ENCODE measurements at regions of chr6 and their contacts with region 1.

Region 1: DNA sequence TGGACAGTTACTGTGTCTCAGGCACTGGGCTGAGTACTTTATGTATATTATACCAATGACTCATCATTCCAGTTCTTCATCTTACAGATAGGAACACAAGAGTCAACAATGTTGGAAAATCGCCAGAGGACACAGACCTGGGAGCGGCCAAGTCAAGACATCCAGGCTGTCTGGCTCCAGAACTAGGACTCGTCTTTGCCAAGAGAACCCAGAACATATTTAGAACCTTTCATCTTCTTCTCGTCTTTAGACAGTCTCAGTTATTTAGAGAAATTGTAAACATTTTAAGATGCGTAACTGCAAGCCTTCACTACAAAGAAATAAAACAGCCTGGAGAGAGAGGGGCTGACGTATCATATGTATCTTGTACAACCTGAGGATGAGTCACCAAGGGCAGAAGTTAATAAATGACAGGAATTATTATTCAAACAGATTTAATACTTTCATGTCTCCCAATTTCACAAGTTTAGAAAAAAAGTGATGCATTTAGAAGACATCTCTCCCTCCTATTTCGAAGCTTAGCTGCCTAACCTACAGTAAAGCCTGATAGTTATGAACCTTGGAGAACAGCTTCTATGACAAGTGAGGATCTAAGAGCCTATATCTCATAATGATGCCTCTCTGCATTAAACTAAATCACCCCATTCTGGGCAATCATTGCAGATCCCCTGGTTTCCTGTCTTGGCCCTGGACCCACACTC is 43.4 kb downstream of the SLC22A3 start:
- DNase-seq: peak; percentile 73
- ATAC-seq: 0 out of 3 replicates have a peak, but pooled peaks have one; percentile 6
- H3K4me3 ChIP-seq: no peak overlapping the region
- H3K27ac ChIP-seq: peak overlapping the region; percentile 40
- H3K4me1 ChIP-seq: peaks cover 60% of the 10 kb centered on the region
- H3K27me3 ChIP-seq: no peaks in the 10 kb centered on the region
- CTCF ChIP-seq: no peak
- EP300 ChIP-seq: no peak; a peak in 1 of 4 replicates
- POLR2A ChIP-seq: no peak
- RAD21 ChIP-seq: no peak

Region 2: DNA sequence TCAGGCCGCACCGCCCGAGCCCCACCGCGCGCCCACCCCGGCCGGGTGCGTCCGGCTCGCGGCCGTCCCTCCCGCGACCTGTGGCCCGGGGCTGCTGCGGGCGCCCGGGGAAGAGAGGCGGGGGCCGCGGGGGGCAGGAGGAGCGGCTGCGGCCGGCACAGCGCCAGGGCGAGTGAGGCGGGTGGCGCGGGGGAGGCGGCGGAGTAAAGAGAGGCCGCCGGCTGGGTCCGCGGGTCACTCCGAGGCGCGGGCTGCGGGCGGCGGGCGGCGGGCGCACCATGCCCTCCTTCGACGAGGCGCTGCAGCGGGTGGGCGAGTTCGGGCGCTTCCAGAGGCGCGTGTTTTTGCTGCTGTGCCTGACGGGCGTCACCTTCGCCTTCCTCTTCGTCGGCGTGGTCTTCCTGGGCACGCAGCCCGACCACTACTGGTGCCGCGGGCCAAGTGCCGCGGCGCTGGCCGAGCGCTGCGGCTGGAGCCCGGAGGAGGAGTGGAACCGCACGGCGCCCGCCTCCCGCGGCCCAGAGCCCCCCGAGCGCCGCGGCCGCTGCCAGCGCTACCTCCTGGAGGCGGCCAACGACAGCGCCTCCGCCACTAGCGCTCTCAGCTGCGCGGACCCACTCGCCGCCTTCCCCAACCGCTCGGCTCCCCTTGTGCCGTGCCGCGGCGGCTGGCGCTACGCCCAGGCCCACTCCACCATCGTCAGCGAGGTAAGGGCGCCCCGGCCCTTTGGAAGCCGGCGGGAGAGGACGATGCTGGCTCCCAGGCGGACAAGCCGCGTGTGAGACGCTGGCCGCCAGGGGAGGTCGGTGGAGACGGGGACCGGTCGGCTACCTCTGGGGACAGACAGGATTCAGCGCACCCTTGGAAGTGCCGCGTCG is 43.2 kb before region 1 on chr6 and contains the start of gene SLC22A3:
- CTCF ChIA-PET with region 1: no interaction called
- POLR2A ChIA-PET with region 1: interaction called, 28 read pairs
- in situ Hi-C with region 1: no loop called
- intact Hi-C with region 1: loop called (anchors 1 kb)
- DNase-seq: no peak
- ATAC-seq: peak; percentile 73
- H3K4me3 ChIP-seq: peak within 1 kb of the TSS; percentile 74 to 86 (median 86)
- H3K27ac ChIP-seq: peak within 1 kb of the TSS; percentile 95
- H3K4me1 ChIP-seq: peaks cover 41% of the 10 kb centered on the region
- H3K27me3 ChIP-seq: peaks cover 0 to 6% of the 10 kb centered on the region in 2 experiments; a peak in 1 of 5 replicates
- CTCF ChIP-seq: peak; percentile 31
- EP300 ChIP-seq: no peak
- POLR2A ChIP-seq: peak in 1 of 2 experiments; percentile 49; a peak in 2 of 4 replicates
- RAD21 ChIP-seq: peak; percentile 4
- total RNA-seq, gene SLC22A3: 20.1 and 31.5 TPM in 2 replicates

Region 3: DNA sequence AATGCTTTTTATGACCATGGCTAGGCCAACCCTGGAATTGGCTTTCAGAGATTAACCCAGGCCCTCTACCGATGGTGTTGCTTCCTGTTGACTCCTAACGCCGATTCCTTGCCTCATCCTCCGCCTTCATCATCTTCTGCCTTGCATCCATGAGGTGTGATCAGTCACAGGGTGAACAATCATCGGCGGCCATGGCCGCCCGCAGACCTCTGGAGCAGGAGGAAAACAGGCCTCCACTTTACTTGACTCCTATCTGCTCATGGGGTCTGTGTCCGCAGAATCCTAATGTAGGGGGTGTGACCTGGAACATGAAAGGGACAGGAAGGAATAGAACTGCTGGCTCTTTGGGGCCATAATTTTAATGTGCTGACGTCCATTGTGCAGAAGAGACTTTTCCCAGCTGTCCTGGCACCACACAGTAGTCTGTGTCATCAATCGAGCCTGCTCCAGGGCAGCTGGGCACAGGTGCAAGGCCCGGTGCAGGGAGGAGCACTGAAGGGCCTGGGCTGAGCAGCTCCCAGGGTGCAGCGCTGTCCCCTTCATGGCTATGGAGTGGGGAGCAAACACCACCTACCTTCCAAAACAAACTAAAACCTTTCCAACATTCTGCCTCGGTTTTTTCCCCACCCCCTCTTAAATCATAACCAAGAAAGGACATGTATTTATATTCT is 35.4 kb before region 1 on chr6:
- CTCF ChIA-PET with region 1: no interaction called
- POLR2A ChIA-PET with region 1: interaction called, 7 read pairs
- in situ Hi-C with region 1: no loop called
- intact Hi-C with region 1: loop called (anchors 2 kb)
- DNase-seq: no peak
- ATAC-seq: peak; percentile 50
- H3K4me3 ChIP-seq: no peak overlapping the region
- H3K27ac ChIP-seq: peak overlapping the region; percentile 35
- H3K4me1 ChIP-seq: peaks cover 79% of the 10 kb centered on the region
- H3K27me3 ChIP-seq: no peaks in the 10 kb centered on the region
- CTCF ChIP-seq: no peak
- EP300 ChIP-seq: no peak
- POLR2A ChIP-seq: no peak
- RAD21 ChIP-seq: no peak

Region 4: GRCh38 chr6:160374836-160375560 is 16.6 kb before region 1 on chr6:
- CTCF ChIA-PET with region 1: no interaction called
- POLR2A ChIA-PET with region 1: interaction called, 18 read pairs
- in situ Hi-C with region 1: no loop called
- intact Hi-C with region 1: no loop called
- DNase-seq: no peak
- ATAC-seq: 0 out of 3 replicates have a peak, but pooled peaks have one; percentile 14
- H3K4me3 ChIP-seq: no peak overlapping the region
- H3K27ac ChIP-seq: no peak overlapping the region
- H3K4me1 ChIP-seq: peaks cover 40% of the 10 kb centered on the region
- H3K27me3 ChIP-seq: no peaks in the 10 kb centered on the region
- CTCF ChIP-seq: no peak
- EP300 ChIP-seq: no peak
- POLR2A ChIP-seq: no peak
- RAD21 ChIP-seq: no peak

Measured in HepG2 (cell line).